WTC11 (cell line): ENCODE measurements at regions of chr11 and their contacts with region 1.

Region 1: DNA sequence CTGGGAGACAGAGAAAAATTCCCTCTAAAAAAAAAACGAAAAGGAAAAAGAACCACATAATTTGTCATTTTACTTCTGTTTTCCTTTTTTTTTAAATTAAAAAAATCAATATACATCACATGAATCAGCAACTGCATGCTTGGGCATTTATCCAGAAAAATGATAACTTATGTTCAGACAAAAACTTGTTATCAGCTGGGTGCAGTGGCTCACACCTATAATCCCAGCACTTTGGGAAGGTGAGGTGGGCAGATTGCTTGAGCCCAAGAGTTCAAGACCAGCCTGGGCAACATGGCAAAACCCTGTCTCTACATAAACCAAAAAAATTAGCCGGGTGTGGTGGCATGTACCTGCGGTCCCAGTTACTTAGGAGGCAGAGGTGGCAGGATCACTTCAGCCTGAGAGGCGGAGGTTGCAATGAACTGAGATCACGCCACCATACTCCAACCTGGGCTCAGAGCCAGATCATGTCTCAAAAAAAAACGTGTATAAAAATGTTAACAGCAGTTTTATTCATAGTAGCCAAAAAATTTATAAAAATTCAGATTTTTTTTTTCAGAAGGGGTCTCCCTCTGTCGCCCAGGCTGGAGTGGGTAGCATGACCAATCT is 28.5 kb downstream of the AMBRA1 start:
- DNase-seq: no peak
- ATAC-seq: no peak
- H3K4me3 Mint-ChIP-seq: no peak overlapping the region
- H3K27ac Mint-ChIP-seq: no peak overlapping the region
- H3K4me1 Mint-ChIP-seq: peaks cover 3% of the 10 kb centered on the region
- H3K27me3 Mint-ChIP-seq: no peaks in the 10 kb centered on the region
- CTCF ChIP-seq: no peak

Region 2: DNA sequence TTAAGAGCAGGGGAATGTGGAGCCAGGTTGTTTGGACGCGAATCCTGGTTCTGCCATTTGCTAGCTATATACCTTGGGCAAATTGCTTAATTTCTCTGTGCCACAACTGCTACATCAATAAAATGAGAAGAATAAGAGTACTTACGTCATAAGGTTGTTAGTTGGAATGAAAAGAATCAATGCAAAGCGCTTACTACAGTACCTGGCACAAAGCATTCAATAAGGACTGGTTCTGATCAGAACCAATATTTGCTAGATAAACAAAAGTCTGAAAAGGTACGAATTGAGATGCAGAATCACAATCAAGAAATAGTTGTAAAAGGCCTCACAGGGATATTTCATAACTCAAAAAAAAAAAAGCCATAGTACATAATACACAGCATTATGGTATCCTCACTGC is 17.3 kb after region 1 on chr11:
- CTCF ChIA-PET with region 1: no interaction called
- POLR2A ChIA-PET with region 1: no interaction called
- DNase-seq: no peak
- ATAC-seq: no peak
- H3K4me3 Mint-ChIP-seq: no peak overlapping the region
- H3K27ac Mint-ChIP-seq: no peak overlapping the region
- H3K4me1 Mint-ChIP-seq: no peaks in the 10 kb centered on the region
- H3K27me3 Mint-ChIP-seq: no peaks in the 10 kb centered on the region
- CTCF ChIP-seq: no peak

Region 3: DNA sequence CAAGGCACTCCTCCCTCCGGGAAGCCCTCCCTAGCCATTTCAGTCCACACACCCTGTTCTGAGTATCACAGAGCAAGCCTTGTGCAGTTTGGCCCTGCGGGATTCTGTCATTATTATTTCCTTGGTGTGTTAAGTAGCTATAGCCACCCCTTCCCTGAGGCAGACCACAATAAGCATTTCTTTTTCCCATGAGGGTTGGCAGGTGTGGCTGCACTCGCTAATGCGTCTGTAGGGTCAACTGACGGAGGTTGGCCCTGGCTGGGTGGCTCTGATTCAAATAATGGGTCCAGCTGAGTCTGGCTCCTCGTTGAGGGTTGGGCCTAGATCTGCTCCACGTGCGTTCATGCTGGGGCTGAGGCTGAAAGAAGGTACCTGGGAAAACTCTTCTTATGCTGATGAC is 158.8 kb after region 1 on chr11:
- CTCF ChIA-PET with region 1: no interaction called
- POLR2A ChIA-PET with region 1: interaction called, 11 read pairs
- DNase-seq: no peak
- ATAC-seq: peak; percentile 33
- H3K4me3 Mint-ChIP-seq: no peak overlapping the region
- H3K27ac Mint-ChIP-seq: peak overlapping the region; percentile 53
- H3K4me1 Mint-ChIP-seq: peaks cover 10% of the 10 kb centered on the region
- H3K27me3 Mint-ChIP-seq: no peaks in the 10 kb centered on the region
- CTCF ChIP-seq: no peak